ENCODE measurements at regions of chr16 and their contacts with region 1.

Region 1: GRCh38 chr16:15593235-15593634 is 49.7 kb downstream of the MARF1 start:
- DNase-seq: no peak
- H3K4me3 ChIP-seq: no peak overlapping the region
- H3K27ac ChIP-seq: no peak overlapping the region
- H3K4me1 ChIP-seq: peaks cover 10 to 32% (median 16%) of the 10 kb centered on the region in 4 donors
- H3K27me3 ChIP-seq: no peaks in the 10 kb centered on the region
- CTCF ChIP-seq: no peak
- EP300 ChIP-seq: no peak
- POLR2A ChIP-seq: no peak

Region 2: GRCh38 chr16:15553313-15554088 is 39.7 kb before region 1 on chr16:
- in situ Hi-C with region 1: no loop called
- intact Hi-C with region 1: no loop called
- DNase-seq: no peak
- H3K4me3 ChIP-seq: no peak overlapping the region
- H3K27ac ChIP-seq: no peak overlapping the region
- H3K4me1 ChIP-seq: peaks cover 0 to 3% (median 0%) of the 10 kb centered on the region in 4 donors
- H3K27me3 ChIP-seq: no peaks in the 10 kb centered on the region
- CTCF ChIP-seq: no peak
- EP300 ChIP-seq: no peak
- POLR2A ChIP-seq: no peak

Region 3: GRCh38 chr16:15572329-15573001 is 20.8 kb before region 1 on chr16:
- in situ Hi-C with region 1: no loop called
- intact Hi-C with region 1: loop called (anchors 1 kb)
- DNase-seq: no peak
- H3K4me3 ChIP-seq: no peak overlapping the region
- H3K27ac ChIP-seq: peak overlapping the region; percentile 58 to 73 (median 62)
- H3K4me1 ChIP-seq: peaks cover 9 to 50% (median 25%) of the 10 kb centered on the region in 4 donors
- H3K27me3 ChIP-seq: no peaks in the 10 kb centered on the region
- CTCF ChIP-seq: no peak
- EP300 ChIP-seq: no peak
- POLR2A ChIP-seq: no peak

Region 4: GRCh38 chr16:15643048-15643945 is 50.1 kb after region 1 on chr16 and contains the start of gene MARF1:
- in situ Hi-C with region 1: no loop called
- intact Hi-C with region 1: no loop called
- DNase-seq: peak; percentile 100
- H3K4me3 ChIP-seq: peak within 1 kb of the TSS; percentile 55 to 98 (median 82)
- H3K27ac ChIP-seq: peak within 1 kb of the TSS; percentile 98 to 100 (median 98)
- H3K4me1 ChIP-seq: peaks cover 8 to 39% (median 30%) of the 10 kb centered on the region in 4 donors
- H3K27me3 ChIP-seq: no peaks in the 10 kb centered on the region
- CTCF ChIP-seq: peak; percentile 41 to 72 (median 47)
- EP300 ChIP-seq: no peak
- POLR2A ChIP-seq: peak; percentile 99
- total RNA-seq, gene MARF1: 32.0 to 52.6 (median 41.1) TPM

Measured in transverse colon (tissue), 4 donors.